Caco-2 (cell line): ENCODE measurements at regions of chr19 and their contacts with region 1.

Region 1: DNA sequence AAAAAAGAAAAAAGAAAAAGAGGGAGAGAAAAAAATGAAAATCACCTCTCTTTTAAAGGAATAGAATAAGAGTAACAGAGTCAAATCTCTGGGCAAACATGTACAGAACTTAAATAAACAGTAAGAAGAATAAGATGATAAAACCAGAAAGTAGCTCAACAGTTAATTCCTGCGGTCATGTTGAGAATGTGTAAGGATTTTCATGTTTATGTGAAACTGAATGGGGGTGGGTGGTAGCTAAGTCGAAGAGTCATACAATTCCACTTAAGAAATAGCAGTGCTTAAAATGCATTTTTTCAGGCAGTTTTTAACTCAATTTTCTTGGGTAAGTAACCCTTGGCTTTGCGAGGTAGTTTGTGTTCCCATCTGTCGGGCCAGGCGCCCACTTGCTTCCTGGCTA is 60.9 kb downstream of the PEX11G start:
- DNase-seq: no peak
- H3K4me3 ChIP-seq: no peak overlapping the region
- H3K4me3 Mint-ChIP-seq: no peak overlapping the region
- H3K27ac Mint-ChIP-seq: no peak overlapping the region
- H3K4me1 ChIP-seq: peaks cover 56% of the 10 kb centered on the region
- H3K4me1 Mint-ChIP-seq: peaks cover 8% of the 10 kb centered on the region
- H3K27me3 ChIP-seq: no peaks in the 10 kb centered on the region
- H3K27me3 Mint-ChIP-seq: no peaks in the 10 kb centered on the region
- CTCF ChIP-seq: no peak

Region 2: GRCh38 chr19:7337380-7338194 is 90.4 kb before region 1 on chr19:
- CTCF ChIA-PET with region 1: no interaction called
- POLR2A ChIA-PET with region 1: no interaction called
- intact Hi-C with region 1: no loop called
- DNase-seq: peak in 1 of 2 experiments; percentile 23
- H3K4me3 ChIP-seq: no peak overlapping the region
- H3K4me3 Mint-ChIP-seq: no peak overlapping the region
- H3K27ac Mint-ChIP-seq: no peak overlapping the region
- H3K4me1 ChIP-seq: no peaks in the 10 kb centered on the region; the same call in 1 of the 2 replicates
- H3K4me1 Mint-ChIP-seq: no peaks in the 10 kb centered on the region
- H3K27me3 ChIP-seq: no peaks in the 10 kb centered on the region
- H3K27me3 Mint-ChIP-seq: peaks cover 3% of the 10 kb centered on the region
- CTCF ChIP-seq: no peak

Region 3: DNA sequence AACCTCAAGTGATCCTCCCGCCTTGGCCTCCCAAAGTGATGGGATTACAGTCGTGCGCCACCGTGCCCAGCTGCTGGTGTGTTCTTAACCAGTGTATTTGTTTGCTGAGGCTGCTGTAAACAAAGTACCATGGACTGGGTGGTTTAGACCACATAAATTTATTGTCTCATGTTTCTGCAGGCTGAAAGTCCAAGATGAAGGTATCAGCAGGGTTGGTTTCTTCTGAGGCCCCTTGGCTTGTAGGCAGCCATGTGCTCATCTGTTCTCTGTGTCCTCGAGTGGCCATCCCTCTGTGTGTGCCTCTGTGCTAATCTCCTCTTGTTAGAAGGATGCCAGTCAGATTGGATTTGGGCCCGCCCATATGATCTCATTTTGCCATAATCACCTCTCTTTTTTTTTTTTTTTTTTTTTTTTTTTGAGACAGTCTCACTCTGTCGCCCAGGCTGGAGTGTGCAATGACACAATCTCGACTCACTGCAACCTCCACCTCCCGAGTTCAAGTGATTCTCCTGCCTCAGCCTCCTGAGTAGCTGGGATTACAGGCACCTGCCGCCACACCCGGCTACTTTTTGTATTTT is 29.1 kb after region 1 on chr19:
- CTCF ChIA-PET with region 1: interaction called, 5 read pairs
- POLR2A ChIA-PET with region 1: interaction called, 10 read pairs
- intact Hi-C with region 1: no loop called
- DNase-seq: no peak
- H3K4me3 ChIP-seq: no peak overlapping the region
- H3K4me3 Mint-ChIP-seq: no peak overlapping the region
- H3K27ac Mint-ChIP-seq: no peak overlapping the region
- H3K4me1 ChIP-seq: no peaks in the 10 kb centered on the region
- H3K4me1 Mint-ChIP-seq: no peaks in the 10 kb centered on the region
- H3K27me3 ChIP-seq: no peaks in the 10 kb centered on the region
- H3K27me3 Mint-ChIP-seq: no peaks in the 10 kb centered on the region
- CTCF ChIP-seq: no peak